ENCODE measurements at regions of chr6 and their contacts with region 1.

Region 1: DNA sequence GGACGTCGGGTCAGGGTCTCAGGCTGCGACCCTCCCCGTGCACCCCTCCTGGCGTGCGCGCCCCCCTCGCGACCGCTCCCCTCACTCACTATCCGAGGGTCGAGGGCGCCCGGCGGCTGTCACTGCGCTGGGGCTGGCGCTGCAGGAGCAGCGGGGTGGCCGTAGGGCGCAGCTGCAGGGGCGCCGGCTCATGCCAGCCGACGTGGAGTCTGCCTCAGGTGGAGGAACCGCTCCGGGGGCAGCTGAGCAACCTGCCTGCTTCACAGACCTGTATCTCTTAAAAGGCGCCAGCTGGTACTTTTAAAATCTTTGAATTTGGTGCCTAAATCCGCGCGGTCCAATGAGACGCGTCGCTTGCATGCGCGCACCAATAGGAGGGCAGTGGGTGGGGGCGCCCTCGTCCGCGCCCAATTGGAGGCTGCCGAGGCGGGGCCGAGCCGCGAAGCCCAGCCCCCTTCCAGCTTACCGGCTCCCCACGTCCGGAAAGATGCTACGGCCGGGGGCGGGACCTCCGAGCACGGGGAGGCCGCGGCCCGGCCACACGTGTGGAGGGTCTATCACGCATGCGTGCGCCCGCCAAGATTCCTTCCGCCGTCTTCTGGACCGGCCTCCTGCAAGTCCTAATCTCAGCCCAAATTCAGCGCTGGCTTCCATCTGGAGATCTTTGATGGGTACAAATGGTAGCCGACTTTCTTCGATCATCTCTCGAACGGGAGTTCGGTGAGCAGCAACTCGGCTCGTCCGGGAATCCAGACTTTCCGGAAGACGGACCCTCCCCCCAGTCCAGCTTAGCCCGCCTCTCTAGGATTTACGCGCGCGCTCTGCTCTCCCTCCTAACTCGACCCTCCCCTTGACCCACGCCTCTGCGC is at the start of gene FBXO5:
- DNase-seq: peak; percentile 94 to 99 (median 98)
- ATAC-seq: peak; percentile 88
- H3K4me3 ChIP-seq: peak within 1 kb of the TSS; percentile 99
- H3K27ac ChIP-seq: peak within 1 kb of the TSS; percentile 94
- H3K4me1 ChIP-seq: peaks cover 9 to 24% of the 10 kb centered on the region in 2 experiments
- H3K27me3 ChIP-seq: no peaks in the 10 kb centered on the region
- CTCF ChIP-seq: no peak
- EP300 ChIP-seq: no peak; the same call in none of the 2 replicates
- POLR2A ChIP-seq: peak; percentile 87
- RAD21 ChIP-seq: no peak; a peak in 1 of 4 replicates
- polyA plus RNA-seq, gene FBXO5: 17.8 to 18.4 TPM

Region 2: GRCh38 chr6:151390276-151391032 is 1592.5 kb before region 1 on chr6:
- CTCF ChIA-PET with region 1: no interaction called
- POLR2A ChIA-PET with region 1: no interaction called
- in situ Hi-C with region 1: no loop called
- intact Hi-C with region 1: loop called (anchors 5 kb)
- DNase-seq: peak; percentile 97 to 100 (median 98)
- ATAC-seq: peak; percentile 90
- H3K4me3 ChIP-seq: peak overlapping the region; percentile 93
- H3K27ac ChIP-seq: peak overlapping the region; percentile 96
- H3K4me1 ChIP-seq: peaks cover 10 to 30% of the 10 kb centered on the region in 2 experiments; a peak in 4 of 5 replicates
- H3K27me3 ChIP-seq: no peaks in the 10 kb centered on the region
- CTCF ChIP-seq: peak in 2 of 3 experiments; percentile 30 to 39; a peak in 4 of 6 replicates
- EP300 ChIP-seq: no peak
- POLR2A ChIP-seq: peak; percentile 74
- RAD21 ChIP-seq: no peak

Region 3: DNA sequence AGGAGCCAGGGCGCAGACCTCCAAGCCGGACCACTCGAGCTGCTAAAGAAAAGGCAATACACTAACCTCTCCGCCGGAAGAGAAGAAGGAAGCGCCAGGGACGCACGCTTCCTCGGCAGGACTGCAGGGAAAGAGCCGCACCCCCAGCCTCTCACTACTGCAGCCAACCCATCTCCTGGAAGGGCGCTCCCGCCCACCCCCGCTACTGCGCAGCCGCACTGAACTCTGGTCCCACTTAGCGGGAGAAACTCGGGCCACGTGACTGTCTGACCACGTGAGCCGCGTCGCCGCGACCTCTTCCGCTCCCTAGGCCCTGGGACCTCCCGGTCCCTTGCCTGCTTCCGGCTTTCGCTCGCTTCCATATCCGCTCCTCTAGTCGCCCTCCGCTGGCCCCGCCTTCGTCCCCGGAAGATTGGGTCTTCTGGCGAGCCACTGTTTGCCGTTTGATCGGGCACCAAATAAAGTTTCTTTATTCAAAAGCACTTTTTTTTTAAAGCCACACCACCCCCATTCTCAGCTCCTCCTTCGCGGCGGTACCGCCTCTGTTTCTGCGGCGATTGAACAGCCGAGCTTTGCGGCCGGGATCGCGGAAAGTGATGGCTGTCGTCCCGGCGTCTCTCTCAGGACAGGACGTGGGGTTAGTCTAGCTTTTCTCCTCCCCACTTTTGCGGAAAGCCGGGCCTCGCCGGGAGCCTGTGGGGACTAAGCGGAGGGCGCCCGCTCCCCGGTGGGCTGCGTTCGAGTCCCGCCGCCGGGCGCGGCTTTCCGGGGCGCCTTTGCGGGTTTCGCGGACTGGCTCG is 1530.9 kb before region 1 on chr6 and contains the start of gene RMND1:
- CTCF ChIA-PET with region 1: no interaction called
- POLR2A ChIA-PET with region 1: no interaction called
- in situ Hi-C with region 1: no loop called
- intact Hi-C with region 1: loop called (anchors 5 kb)
- DNase-seq: peak; percentile 99 to 100 (median 99)
- ATAC-seq: peak; percentile 97
- H3K4me3 ChIP-seq: peak within 1 kb of the TSS; percentile 75
- H3K27ac ChIP-seq: peak within 1 kb of the TSS; percentile 78
- H3K4me1 ChIP-seq: peaks cover 0 to 7% of the 10 kb centered on the region in 2 experiments; a peak in 4 of 5 replicates
- H3K27me3 ChIP-seq: no peaks in the 10 kb centered on the region
- CTCF ChIP-seq: no peak
- EP300 ChIP-seq: peak; percentile 73
- POLR2A ChIP-seq: peak; percentile 94
- RAD21 ChIP-seq: no peak
- polyA plus RNA-seq, gene RMND1: 36.2 to 38.4 TPM

Region 4: GRCh38 chr6:152948150-152948768 is 34.7 kb before region 1 on chr6:
- CTCF ChIA-PET with region 1: no interaction called
- POLR2A ChIA-PET with region 1: no interaction called
- in situ Hi-C with region 1: no loop called
- intact Hi-C with region 1: no loop called
- DNase-seq: peak in 2 of 4 experiments; percentile 42 to 75
- ATAC-seq: peak; percentile 94
- H3K4me3 ChIP-seq: no peak overlapping the region
- H3K27ac ChIP-seq: no peak overlapping the region
- H3K4me1 ChIP-seq: no peaks in the 10 kb centered on the region
- H3K27me3 ChIP-seq: peaks cover 0 to 2% of the 10 kb centered on the region in 2 experiments; a peak in 1 of 5 replicates
- CTCF ChIP-seq: peak; percentile 65 to 87 (median 74); a peak in 5 of 6 replicates
- EP300 ChIP-seq: no peak
- POLR2A ChIP-seq: no peak
- RAD21 ChIP-seq: peak; percentile 91 to 96

Region 5: GRCh38 chr6:152993431-152993830 is 10.4 kb after region 1 on chr6:
- CTCF ChIA-PET with region 1: no interaction called
- POLR2A ChIA-PET with region 1: interaction called, 11 read pairs
- in situ Hi-C with region 1: no loop called
- intact Hi-C with region 1: no loop called
- DNase-seq: peak in 1 of 4 experiments; percentile 21
- ATAC-seq: peak; percentile 71
- H3K4me3 ChIP-seq: no peak overlapping the region
- H3K27ac ChIP-seq: no peak overlapping the region
- H3K4me1 ChIP-seq: no peaks in the 10 kb centered on the region
- H3K27me3 ChIP-seq: no peaks in the 10 kb centered on the region
- CTCF ChIP-seq: 0 out of 6 replicates have a peak, but pooled peaks of 1 of the 3 experiments have one; percentile 26
- EP300 ChIP-seq: no peak
- POLR2A ChIP-seq: peak; percentile 33; the same call in 1 of the 2 replicates
- RAD21 ChIP-seq: no peak

Region 6: GRCh38 chr6:154510143-154510905 is 1527.3 kb after region 1 on chr6 and contains the start of gene CNKSR3:
- CTCF ChIA-PET with region 1: no interaction called
- POLR2A ChIA-PET with region 1: interaction called, 3 read pairs
- in situ Hi-C with region 1: loop called (anchors 25 kb)
- intact Hi-C with region 1: no loop called
- DNase-seq: peak; percentile 89 to 95 (median 90)
- ATAC-seq: peak; percentile 85
- H3K4me3 ChIP-seq: peak within 1 kb of the TSS; percentile 69
- H3K27ac ChIP-seq: peak within 1 kb of the TSS; percentile 70
- H3K4me1 ChIP-seq: peaks cover 22 to 38% of the 10 kb centered on the region in 2 experiments; a peak in 4 of 5 replicates
- H3K27me3 ChIP-seq: no peaks in the 10 kb centered on the region
- CTCF ChIP-seq: peak in 1 of 3 experiments; percentile 24; a peak in 1 of 6 replicates
- EP300 ChIP-seq: peak; percentile 22; the same call in 1 of the 2 replicates
- POLR2A ChIP-seq: no peak; the same call in 1 of the 2 replicates
- RAD21 ChIP-seq: no peak
- polyA plus RNA-seq, gene CNKSR3: 4.5 to 5.3 TPM